ENCODE measurements at regions of chr2 and their contacts with region 1.

Region 1: DNA sequence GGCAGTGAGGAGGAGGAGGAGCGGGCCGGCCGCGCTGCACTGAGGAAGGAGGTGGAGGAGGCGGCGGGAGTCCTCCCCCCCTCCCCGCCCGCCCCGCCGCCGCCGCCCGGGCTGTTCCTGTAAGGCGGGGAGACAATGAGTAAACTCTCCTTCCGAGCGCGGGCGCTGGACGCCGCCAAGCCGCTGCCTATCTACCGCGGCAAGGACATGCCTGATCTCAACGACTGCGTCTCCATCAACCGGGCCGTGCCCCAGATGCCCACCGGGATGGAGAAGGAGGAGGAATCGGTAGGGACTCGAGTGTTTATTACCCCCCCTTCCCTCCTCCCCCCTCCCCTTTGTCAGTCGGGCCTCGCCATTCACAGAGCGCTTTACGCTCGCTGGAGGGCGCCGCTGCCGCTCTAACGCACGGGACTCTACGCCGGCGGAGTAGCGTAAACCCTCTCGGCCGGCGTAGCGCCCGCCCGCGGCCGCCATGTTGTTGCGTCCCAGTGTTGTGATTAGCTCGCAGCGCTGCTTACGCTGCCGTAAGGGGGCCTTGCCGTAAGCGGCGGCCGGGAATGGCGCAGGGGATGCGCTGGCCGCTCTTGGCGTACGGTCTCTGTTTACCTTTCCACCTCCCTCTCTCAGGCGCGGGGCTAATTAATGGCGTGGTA is 460 bp downstream of the EPC2 start:
- DNase-seq: peak; percentile 90
- H3K4me3 Mint-ChIP-seq: peak overlapping the region; percentile 91
- H3K27ac Mint-ChIP-seq: peak overlapping the region; percentile 99
- H3K4me1 Mint-ChIP-seq: peaks cover 27% of the 10 kb centered on the region
- H3K27me3 Mint-ChIP-seq: no peaks in the 10 kb centered on the region
- CTCF ChIP-seq: peak; percentile 13

Region 2: GRCh38 chr2:147937744-147938349 is 707.2 kb before region 1 on chr2:
- CTCF ChIA-PET with region 1: interaction called, 6 read pairs
- POLR2A ChIA-PET with region 1: no interaction called
- intact Hi-C with region 1: loop called (anchors 2 kb)
- DNase-seq: peak; percentile 48
- H3K4me3 Mint-ChIP-seq: no peak overlapping the region
- H3K27ac Mint-ChIP-seq: no peak overlapping the region
- H3K4me1 Mint-ChIP-seq: no peaks in the 10 kb centered on the region
- H3K27me3 Mint-ChIP-seq: no peaks in the 10 kb centered on the region
- CTCF ChIP-seq: peak; percentile 75

Region 3: DNA sequence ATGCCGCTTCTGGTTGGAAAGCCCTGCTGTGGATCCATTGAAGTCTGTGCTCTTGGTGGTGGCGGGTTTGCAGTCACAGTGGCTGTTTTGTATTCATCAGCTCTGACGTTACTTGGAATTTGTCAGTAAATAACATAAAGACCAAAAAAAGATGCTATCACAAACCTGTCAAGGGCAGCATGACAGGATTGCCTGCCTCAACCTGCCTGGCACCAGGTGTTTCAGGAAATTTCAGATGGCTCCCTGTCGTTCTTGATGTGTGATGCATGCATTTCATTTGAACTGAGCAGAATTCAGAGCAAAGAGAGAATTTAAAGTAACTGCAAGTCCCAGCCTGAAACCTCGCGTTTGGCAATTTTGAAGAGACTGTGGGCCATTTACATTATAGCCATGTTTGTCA is 50.8 kb before region 1 on chr2:
- CTCF ChIA-PET with region 1: interaction called, 3 read pairs
- POLR2A ChIA-PET with region 1: interaction called, 15 read pairs
- intact Hi-C with region 1: no loop called
- DNase-seq: no peak
- H3K4me3 Mint-ChIP-seq: no peak overlapping the region
- H3K27ac Mint-ChIP-seq: no peak overlapping the region
- H3K4me1 Mint-ChIP-seq: peaks cover 16% of the 10 kb centered on the region
- H3K27me3 Mint-ChIP-seq: no peaks in the 10 kb centered on the region
- CTCF ChIP-seq: no peak

Region 4: DNA sequence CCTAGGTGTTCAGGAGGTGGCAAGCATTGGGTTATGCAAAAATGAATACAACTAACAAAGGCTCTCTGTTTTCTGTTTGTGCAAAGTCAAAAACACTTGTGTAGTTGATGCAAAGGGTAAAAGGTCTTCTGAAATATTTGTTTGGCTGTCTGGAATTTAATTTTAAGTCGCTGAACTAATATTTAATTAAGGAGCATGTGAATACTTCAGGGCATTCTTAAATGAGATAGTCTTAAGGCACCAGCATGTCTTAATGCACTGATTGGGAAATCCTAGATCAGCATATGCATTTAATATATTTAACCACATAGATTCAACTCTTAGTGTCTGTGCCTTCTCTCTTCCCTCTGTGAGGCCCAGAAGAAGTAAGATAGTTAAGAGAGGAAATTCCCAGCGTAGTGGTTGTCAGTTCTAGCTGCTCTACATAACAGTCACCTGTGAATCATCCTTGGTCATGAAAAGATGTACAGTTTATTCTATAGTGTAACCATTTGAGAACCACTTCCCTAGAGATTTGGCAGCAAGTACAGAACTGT is 111.5 kb after region 1 on chr2:
- CTCF ChIA-PET with region 1: no interaction called
- POLR2A ChIA-PET with region 1: interaction called, 3 read pairs
- intact Hi-C with region 1: loop called (anchors 10 kb)
- DNase-seq: peak; percentile 67
- H3K4me3 Mint-ChIP-seq: no peak overlapping the region
- H3K27ac Mint-ChIP-seq: peak overlapping the region; percentile 20
- H3K4me1 Mint-ChIP-seq: peaks cover 13% of the 10 kb centered on the region
- H3K27me3 Mint-ChIP-seq: no peaks in the 10 kb centered on the region
- CTCF ChIP-seq: no peak

Region 5: GRCh38 chr2:148989882-148990493 is 345.0 kb after region 1 on chr2:
- CTCF ChIA-PET with region 1: interaction called, 6 read pairs
- POLR2A ChIA-PET with region 1: interaction called, 3 read pairs
- intact Hi-C with region 1: loop called (anchors 1 kb)
- DNase-seq: peak; percentile 80
- H3K4me3 Mint-ChIP-seq: no peak overlapping the region
- H3K27ac Mint-ChIP-seq: no peak overlapping the region
- H3K4me1 Mint-ChIP-seq: no peaks in the 10 kb centered on the region
- H3K27me3 Mint-ChIP-seq: no peaks in the 10 kb centered on the region
- CTCF ChIP-seq: peak; percentile 83

Measured in MCF 10A (cell line).